BJ (cell line): ENCODE measurements at regions of chr6 and their contacts with region 1.

Region 1: GRCh38 chr6:89352278-89353117 is at the start of gene UBE2J1:
- DNase-seq: peak; percentile 63
- H3K4me3 ChIP-seq: peak within 1 kb of the TSS; percentile 77
- H3K27me3 ChIP-seq: no peaks in the 10 kb centered on the region; the same call in 1 of the 2 replicates
- CTCF ChIP-seq: no peak
- polyA plus RNA-seq, gene UBE2J1: 27.1 and 43.3 TPM in 2 replicates

Region 2: GRCh38 chr6:89311853-89312531 is 40.5 kb before region 1 on chr6:
- CTCF ChIA-PET with region 1: interaction called, 19 read pairs
- POLR2A ChIA-PET with region 1: no interaction called
- DNase-seq: no peak
- H3K4me3 ChIP-seq: no peak overlapping the region
- H3K27me3 ChIP-seq: peaks cover 3% of the 10 kb centered on the region
- CTCF ChIP-seq: peak; percentile 69; the same call in 1 of the 2 replicates

Region 3: GRCh38 chr6:89339565-89339964 is 12.9 kb before region 1 on chr6:
- CTCF ChIA-PET with region 1: interaction called, 3 read pairs
- POLR2A ChIA-PET with region 1: interaction called, 11 read pairs
- DNase-seq: no peak
- H3K4me3 ChIP-seq: no peak overlapping the region
- H3K27me3 ChIP-seq: no peaks in the 10 kb centered on the region
- CTCF ChIP-seq: no peak